Adrenal gland (tissue), 19 donors: ENCODE measurements at regions of chr13 and their contacts with region 1.

Region 1: GRCh38 chr13:114226699-114227323 is 7.9 kb upstream of the CDC16 start:
- DNase-seq: peak; percentile 67 to 95 (median 84)
- H3K4me3 ChIP-seq: no peak overlapping the region
- H3K27ac ChIP-seq: no peak overlapping the region
- H3K4me1 ChIP-seq: no peaks in the 10 kb centered on the region
- H3K27me3 ChIP-seq: peaks cover 20% of the 10 kb centered on the region
- CTCF ChIP-seq: peak; percentile 91 to 98 (median 95)
- POLR2A ChIP-seq: no peak

Region 2: GRCh38 chr13:113816946-113817859 is 409.6 kb before region 1 on chr13:
- intact Hi-C with region 1: loop called in 1 of 2 experiments (anchors 5 kb)
- DNase-seq: peak; percentile 83 to 95 (median 90)
- H3K4me3 ChIP-seq: no peak overlapping the region
- H3K27ac ChIP-seq: peak overlapping the region in 1 of 5 donors; percentile 80
- H3K4me1 ChIP-seq: peaks cover 13 to 18% of the 10 kb centered on the region in 2 donors
- H3K27me3 ChIP-seq: no peaks in the 10 kb centered on the region
- CTCF ChIP-seq: peak; percentile 68 to 95 (median 80)
- POLR2A ChIP-seq: no peak

Region 3: GRCh38 chr13:113951246-113951999 is 275.4 kb before region 1 on chr13:
- intact Hi-C with region 1: loop called (anchors 2 to 5 kb)
- DNase-seq: peak; percentile 86 to 91 (median 90)
- H3K4me3 ChIP-seq: no peak overlapping the region
- H3K27ac ChIP-seq: no peak overlapping the region
- H3K4me1 ChIP-seq: peaks cover 0 to 9% of the 10 kb centered on the region in 2 donors
- H3K27me3 ChIP-seq: no peaks in the 10 kb centered on the region
- CTCF ChIP-seq: peak; percentile 72 to 94 (median 91)
- POLR2A ChIP-seq: no peak

Region 4: DNA sequence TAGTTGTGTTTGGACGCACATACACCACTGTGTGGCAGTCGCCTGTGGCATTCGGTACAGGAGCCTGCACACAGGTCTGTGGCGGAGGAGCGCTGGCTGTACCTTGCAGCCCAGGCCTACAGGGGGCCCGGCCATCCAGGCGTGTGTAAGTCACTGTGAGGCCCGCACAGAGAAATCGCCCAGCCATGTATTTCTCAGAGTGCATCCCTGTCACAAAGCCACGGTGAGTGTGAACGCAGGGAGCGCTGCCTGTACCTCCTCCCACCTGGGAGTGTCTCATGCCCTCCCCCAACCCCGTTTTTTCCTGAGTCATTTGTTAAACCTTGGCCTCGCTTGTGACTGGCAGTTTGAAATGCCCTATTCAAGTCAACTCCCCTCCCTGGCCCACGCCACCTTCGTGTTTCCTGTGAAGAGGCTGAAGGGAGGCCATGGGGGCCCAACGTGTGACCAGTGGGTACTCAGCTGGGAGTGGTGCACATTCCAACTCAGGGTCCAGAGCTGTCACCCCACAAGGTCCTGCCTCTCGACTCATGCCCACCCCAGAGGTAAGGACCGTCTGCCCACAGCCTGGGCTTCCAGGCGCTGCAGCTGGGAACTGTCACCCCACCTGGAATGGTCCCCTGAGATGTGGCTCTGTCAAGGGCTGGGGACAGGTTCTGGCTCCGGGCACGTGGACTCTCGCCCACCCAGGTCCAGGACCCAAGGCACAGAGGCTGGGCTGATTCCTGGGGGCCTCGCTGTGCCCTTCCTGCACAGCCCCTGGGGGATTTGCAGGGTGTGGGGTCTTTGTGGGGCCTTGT is 82.8 kb before region 1 on chr13:
- intact Hi-C with region 1: no loop called
- DNase-seq: no peak
- H3K4me3 ChIP-seq: no peak overlapping the region
- H3K27ac ChIP-seq: no peak overlapping the region
- H3K4me1 ChIP-seq: no peaks in the 10 kb centered on the region
- H3K27me3 ChIP-seq: no peaks in the 10 kb centered on the region
- CTCF ChIP-seq: no peak
- POLR2A ChIP-seq: no peak

Region 5: DNA sequence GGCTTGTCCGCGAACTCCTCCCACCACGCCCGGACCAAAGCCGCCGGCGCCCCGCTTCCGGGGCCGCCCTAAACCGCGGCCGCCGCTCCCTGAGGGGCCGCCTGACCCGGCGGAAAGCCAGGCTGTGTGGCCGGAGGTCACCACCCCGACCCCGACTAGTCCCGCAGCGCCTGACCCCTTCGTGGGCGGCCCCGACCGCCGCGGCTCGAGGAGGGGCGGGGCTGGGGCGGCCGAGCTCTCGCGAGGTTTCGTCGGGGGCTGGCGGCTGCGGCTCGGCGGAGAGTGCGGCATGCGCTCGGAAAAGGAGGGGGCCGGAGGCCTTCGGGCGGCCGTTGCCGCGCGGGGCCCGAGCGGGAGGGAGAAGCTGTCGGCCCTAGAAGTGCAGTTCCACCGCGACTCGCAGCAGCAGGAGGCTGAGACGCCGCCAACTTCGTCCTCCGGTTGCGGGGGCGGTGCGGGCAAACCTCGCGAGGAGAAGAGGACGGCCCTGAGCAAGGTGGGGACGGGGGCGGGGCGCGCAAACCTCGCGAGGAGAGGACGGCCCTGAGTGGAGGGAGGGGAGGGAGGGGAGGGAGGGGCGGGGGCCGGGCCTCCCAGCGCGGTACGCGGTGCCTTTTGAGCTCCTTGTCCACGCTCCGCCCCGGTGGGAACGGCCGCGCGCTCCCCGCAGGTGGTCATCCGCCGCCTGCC is 54.7 kb after region 1 on chr13 and contains the start of gene UPF3A:
- intact Hi-C with region 1: no loop called
- DNase-seq: peak; percentile 91 to 94 (median 92)
- H3K4me3 ChIP-seq: peak within 1 kb of the TSS; percentile 57 to 91 (median 66)
- H3K27ac ChIP-seq: peak within 1 kb of the TSS; percentile 97 to 99 (median 98)
- H3K4me1 ChIP-seq: peaks cover 15 to 26% of the 10 kb centered on the region in 2 donors
- H3K27me3 ChIP-seq: no peaks in the 10 kb centered on the region
- CTCF ChIP-seq: no peak
- POLR2A ChIP-seq: peak; percentile 72 to 86
- total RNA-seq, gene UPF3A: 27.5 to 63.6 (median 38.6) TPM